ENCODE measurements at regions of chr1 and their contacts with region 1.

Region 1: GRCh38 chr1:205965036-205965884 is 22.0 kb upstream of the SLC26A9 start:
- DNase-seq: no peak
- H3K4me3 Mint-ChIP-seq: no peak overlapping the region
- H3K27ac Mint-ChIP-seq: no peak overlapping the region
- H3K4me1 Mint-ChIP-seq: peaks cover 2% of the 10 kb centered on the region
- H3K27me3 Mint-ChIP-seq: peaks cover 45% of the 10 kb centered on the region

Region 2: DNA sequence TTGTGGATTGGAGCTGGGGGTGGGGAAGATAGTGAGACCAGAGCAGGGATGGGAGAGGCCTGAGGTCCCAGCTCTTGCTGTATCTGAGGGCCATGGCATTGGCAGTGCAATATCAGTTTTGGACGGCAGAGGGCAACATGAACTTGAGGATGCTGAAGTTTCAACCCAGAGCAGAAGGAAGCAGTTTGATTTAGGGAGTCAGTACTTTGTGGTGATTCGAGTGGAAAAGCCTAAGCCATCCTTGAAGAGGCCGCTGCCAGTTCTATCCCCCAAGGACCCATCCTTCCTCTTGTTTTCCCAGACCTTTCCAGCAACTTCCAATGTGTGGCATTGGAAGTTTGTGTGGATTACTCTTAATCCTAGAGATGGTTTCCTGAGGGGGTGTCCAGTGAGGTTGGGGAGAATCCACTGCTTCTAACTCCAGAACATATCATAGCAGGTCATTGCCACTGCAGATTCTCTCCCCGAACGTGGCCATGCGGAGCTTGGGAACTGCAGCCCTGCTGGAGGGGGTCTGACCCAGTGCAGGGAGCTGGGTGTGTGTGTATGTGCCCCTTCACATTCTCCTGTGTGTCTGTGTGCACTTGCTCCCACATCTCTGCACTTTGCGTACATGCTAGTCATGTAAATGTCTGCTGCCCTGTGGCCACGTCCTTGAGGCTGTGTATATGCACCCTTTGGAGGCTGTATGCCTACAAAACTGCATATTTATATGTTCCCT is 46.1 kb before region 1 on chr1:
- CTCF ChIA-PET with region 1: interaction called, 11 read pairs
- DNase-seq: peak; percentile 84
- H3K4me3 Mint-ChIP-seq: no peak overlapping the region
- H3K27ac Mint-ChIP-seq: no peak overlapping the region
- H3K4me1 Mint-ChIP-seq: no peaks in the 10 kb centered on the region
- H3K27me3 Mint-ChIP-seq: peaks cover 22% of the 10 kb centered on the region